ENCODE measurements at regions of chr11 and their contacts with region 1.

Region 1: GRCh38 chr11:120335908-120336640 is at the start of gene ARHGEF12:
- DNase-seq: peak; percentile 98
- H3K4me3 ChIP-seq: peak within 1 kb of the TSS; percentile 58 to 95 (median 90)
- H3K27ac ChIP-seq: peak within 1 kb of the TSS; percentile 93 to 100 (median 99)
- H3K4me1 ChIP-seq: peaks cover 0 to 75% (median 56%) of the 10 kb centered on the region in 4 donors
- H3K27me3 ChIP-seq: no peaks in the 10 kb centered on the region
- CTCF ChIP-seq: peak in 2 of 4 experiments; percentile 6 to 17
- EP300 ChIP-seq: peak in 1 of 4 donors; percentile 37
- POLR2A ChIP-seq: peak; percentile 37 to 46
- total RNA-seq, gene ARHGEF12: 80.5 to 129 (median 94.8) TPM

Region 2: GRCh38 chr11:120400564-120401364 is 64.7 kb after region 1 on chr11:
- intact Hi-C with region 1: loop called (anchors 1 kb)
- DNase-seq: no peak
- H3K4me3 ChIP-seq: peak overlapping the region; percentile 8 to 38 (median 32)
- H3K27ac ChIP-seq: peak overlapping the region in 3 of 4 donors; percentile 62 to 80 (median 74)
- H3K4me1 ChIP-seq: peaks cover 0 to 64% (median 39%) of the 10 kb centered on the region in 4 donors
- H3K27me3 ChIP-seq: no peaks in the 10 kb centered on the region
- CTCF ChIP-seq: no peak
- EP300 ChIP-seq: no peak
- POLR2A ChIP-seq: no peak

Region 3: DNA sequence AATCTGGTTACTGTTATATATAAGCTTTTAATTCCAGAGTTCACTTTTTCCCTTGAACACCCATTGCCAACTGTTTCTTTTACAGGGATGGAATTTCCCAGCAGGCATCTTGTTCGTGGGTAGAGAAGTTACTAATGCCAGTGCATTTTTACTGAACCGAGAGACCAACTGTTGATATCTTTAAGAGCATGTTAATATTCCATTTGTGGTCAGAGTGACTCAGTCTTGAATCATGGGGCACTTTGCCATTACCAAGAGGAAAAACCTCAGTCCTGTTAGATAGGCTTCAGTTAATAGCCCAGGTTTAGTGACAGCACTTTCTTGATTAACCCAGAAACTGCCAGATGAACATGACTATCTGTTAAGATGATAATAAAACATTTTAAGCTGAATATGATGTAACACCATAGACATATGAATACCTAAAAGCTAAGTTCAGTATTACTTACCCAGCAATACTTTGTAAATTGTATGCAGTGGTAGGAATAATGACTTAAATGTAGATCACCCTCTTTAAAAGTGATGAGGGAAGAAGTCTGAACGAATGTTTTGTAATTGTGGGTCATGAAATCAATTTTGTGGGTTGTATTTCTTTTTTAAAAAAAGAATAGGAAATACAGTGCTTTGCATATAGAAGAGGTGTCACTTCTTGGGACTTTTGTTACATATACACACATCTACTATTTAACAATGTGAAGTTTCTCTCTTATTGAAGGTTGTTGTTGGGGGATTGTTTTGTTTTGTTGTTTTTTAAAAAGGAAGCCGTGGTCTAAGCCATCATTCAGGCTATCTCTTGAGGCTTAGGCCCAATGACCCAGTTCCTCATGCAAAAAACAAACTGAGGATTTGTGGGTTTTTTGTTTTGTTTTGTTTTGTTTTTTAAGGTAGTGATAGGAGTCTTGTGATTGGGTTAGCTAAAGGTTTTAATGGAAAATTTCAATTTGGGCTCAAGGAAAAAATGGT is 96.3 kb after region 1 on chr11:
- intact Hi-C with region 1: loop called (anchors 2 kb)
- DNase-seq: no peak
- H3K4me3 ChIP-seq: no peak overlapping the region
- H3K27ac ChIP-seq: peak overlapping the region; percentile 63 to 77 (median 73)
- H3K4me1 ChIP-seq: peaks cover 0 to 22% (median 17%) of the 10 kb centered on the region in 4 donors
- H3K27me3 ChIP-seq: no peaks in the 10 kb centered on the region
- CTCF ChIP-seq: no peak
- EP300 ChIP-seq: peak in 1 of 4 donors; percentile 13
- POLR2A ChIP-seq: no peak

Region 4: DNA sequence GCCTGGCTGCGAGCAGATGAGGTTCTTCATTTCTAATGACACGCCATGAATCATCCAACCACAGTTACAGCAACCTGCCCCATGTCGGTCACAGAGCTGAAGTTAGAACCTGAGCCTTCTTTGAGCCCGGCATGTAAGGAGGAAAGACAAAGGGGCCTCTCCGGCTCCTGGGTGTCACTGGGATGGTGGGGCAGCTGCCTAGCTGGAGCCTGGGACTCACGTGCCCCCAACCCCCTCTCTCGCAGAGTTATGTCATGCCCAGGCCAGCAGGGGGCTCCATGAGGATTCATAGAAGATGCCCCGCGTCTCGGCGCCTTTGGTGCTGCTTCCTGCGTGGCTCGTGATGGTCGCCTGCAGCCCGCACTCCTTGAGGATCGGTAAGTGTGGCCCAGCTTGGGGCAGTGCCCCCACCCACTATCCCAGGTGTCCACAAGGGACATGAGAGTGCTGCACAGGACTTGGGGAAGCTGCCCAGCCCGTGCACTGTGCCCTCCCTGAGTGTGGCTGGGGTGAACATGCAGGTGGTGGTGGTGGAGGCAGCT is 324.0 kb after region 1 on chr11:
- intact Hi-C with region 1: no loop called
- DNase-seq: no peak
- H3K4me3 ChIP-seq: no peak overlapping the region
- H3K27ac ChIP-seq: no peak overlapping the region
- H3K4me1 ChIP-seq: no peaks in the 10 kb centered on the region
- H3K27me3 ChIP-seq: peaks cover 0 to 4% (median 0%) of the 10 kb centered on the region in 3 donors
- CTCF ChIP-seq: no peak
- EP300 ChIP-seq: no peak
- POLR2A ChIP-seq: no peak

Region 5: GRCh38 chr11:120682866-120683265 is 346.8 kb after region 1 on chr11:
- intact Hi-C with region 1: loop called (anchors 10 kb)
- DNase-seq: no peak
- H3K4me3 ChIP-seq: no peak overlapping the region
- H3K27ac ChIP-seq: no peak overlapping the region
- H3K4me1 ChIP-seq: no peaks in the 10 kb centered on the region
- H3K27me3 ChIP-seq: no peaks in the 10 kb centered on the region
- CTCF ChIP-seq: no peak
- EP300 ChIP-seq: no peak
- POLR2A ChIP-seq: no peak